ENCODE measurements at regions of chr7 and their contacts with region 1.

Region 1: GRCh38 chr7:111752022-111752582 is 189.8 kb upstream of the IMMP2L start:
- DNase-seq: peak; percentile 16 to 33
- H3K4me3 ChIP-seq: no peak overlapping the region
- H3K27ac ChIP-seq: no peak overlapping the region
- H3K4me1 ChIP-seq: peaks cover 0 to 8% of the 10 kb centered on the region in 2 donors
- H3K27me3 ChIP-seq: no peaks in the 10 kb centered on the region
- CTCF ChIP-seq: peak in 5 of 6 experiments; percentile 26 to 62 (median 34)
- POLR2A ChIP-seq: no peak

Region 2: GRCh38 chr7:111813306-111813705 is 61.2 kb after region 1 on chr7:
- intact Hi-C with region 1: no loop called
- DNase-seq: no peak
- H3K4me3 ChIP-seq: no peak overlapping the region
- H3K27ac ChIP-seq: no peak overlapping the region
- H3K4me1 ChIP-seq: no peaks in the 10 kb centered on the region
- H3K27me3 ChIP-seq: no peaks in the 10 kb centered on the region
- CTCF ChIP-seq: no peak
- POLR2A ChIP-seq: no peak

Region 3: DNA sequence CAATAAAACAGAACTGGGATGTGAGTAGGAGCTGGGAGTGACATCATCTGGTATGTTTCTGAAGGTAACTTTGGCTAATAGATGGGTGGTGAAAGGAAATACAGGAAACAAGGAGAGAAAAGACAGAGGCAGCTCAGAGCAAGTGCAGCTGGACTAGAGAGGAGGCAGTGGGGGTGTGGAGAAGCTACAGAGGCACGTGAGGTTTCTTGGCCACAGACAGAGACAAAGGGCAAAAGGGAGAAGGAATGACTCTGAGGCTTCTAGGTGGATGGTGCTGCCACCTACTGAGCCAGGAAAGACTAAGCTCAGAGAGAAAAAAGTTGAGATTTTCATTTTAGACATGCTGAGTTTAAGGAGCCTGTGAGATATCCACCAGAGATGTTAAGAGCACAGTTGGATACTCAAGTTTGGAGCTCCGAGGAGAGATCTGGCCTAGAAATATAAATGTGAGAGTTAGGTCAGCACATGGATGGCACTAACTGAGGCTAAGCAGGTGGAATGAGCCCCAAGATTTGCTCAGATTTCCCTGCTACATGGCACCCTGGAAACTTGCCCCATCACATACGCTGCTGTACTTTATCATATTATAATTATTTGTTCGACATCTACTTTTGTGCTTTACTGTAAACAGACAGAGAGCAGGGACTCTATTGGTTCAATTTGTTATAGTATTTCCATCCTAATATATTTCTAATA is 103.2 kb after region 1 on chr7:
- intact Hi-C with region 1: loop called (anchors 5 kb)
- DNase-seq: peak; percentile 17 to 37
- H3K4me3 ChIP-seq: no peak overlapping the region
- H3K27ac ChIP-seq: no peak overlapping the region
- H3K4me1 ChIP-seq: no peaks in the 10 kb centered on the region
- H3K27me3 ChIP-seq: no peaks in the 10 kb centered on the region
- CTCF ChIP-seq: peak in 4 of 6 experiments; percentile 30 to 46 (median 38)
- POLR2A ChIP-seq: no peak